ENCODE measurements at regions of chr1 and their contacts with region 1.

Region 1: DNA sequence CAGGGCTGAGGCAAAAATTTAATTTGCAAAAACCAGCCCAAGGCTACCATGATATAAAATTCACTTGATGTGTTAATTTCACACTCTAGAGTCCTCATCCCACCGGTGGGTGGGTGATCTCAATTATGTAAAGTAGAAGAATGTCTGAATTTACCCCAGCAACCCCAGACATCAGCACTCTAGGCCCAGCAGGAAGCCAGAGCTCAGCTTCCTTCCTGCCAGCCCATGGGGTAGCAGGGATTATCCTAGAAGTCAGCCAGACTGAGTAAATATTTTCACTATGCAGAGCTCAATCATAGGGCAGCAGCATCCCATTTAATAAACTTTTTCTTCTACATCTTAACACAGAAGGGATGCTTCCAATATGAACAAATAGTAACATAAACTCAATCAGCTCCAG is 71.0 kb downstream of the SIPA1L2 start:
- DNase-seq: no peak

Region 2: GRCh38 chr1:232613752-232614381 is 54.9 kb after region 1 on chr1:
- intact Hi-C with region 1: loop called in 1 of 2 experiments (anchors 2 kb)
- DNase-seq: no peak